ENCODE measurements at regions of chr9 and their contacts with region 1.

Region 1: DNA sequence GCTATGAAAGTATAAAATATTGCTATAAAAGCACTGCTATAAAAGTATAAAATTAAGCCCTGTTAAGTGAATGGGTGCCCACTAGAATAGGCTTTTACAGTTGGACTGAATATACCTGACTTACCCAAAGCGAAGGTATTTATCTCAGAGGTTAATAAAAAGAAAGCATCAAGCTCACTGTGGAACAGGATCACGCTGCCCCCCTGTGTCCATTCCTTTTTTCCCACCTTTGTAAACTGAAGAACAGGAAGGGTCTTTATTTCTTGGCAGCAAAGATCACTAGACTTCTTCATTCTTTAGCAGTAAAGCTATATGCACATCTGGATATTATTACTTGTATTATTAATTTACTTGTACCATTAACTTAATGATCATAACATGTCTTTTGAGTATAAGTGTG is 22.1 kb upstream of the PLPP6 start:
- DNase-seq: peak in 7 of 9 donors; percentile 50 to 72 (median 66)
- ATAC-seq: peak; percentile 70
- H3K4me3 ChIP-seq: no peak overlapping the region
- H3K4me3 Mint-ChIP-seq: no peak overlapping the region
- H3K27ac ChIP-seq: no peak overlapping the region
- H3K27ac Mint-ChIP-seq: peak overlapping the region in 4 of 9 donors; percentile 11 to 62 (median 26)
- H3K4me1 ChIP-seq: peaks cover 0 to 3% of the 10 kb centered on the region in 2 donors
- H3K4me1 Mint-ChIP-seq: peaks cover 0 to 21% (median 15%) of the 10 kb centered on the region in 7 donors
- H3K27me3 ChIP-seq: no peaks in the 10 kb centered on the region
- H3K27me3 Mint-ChIP-seq: no peaks in the 10 kb centered on the region

Region 2: GRCh38 chr9:2857564-2858198 is 1782.3 kb before region 1 on chr9:
- CTCF ChIA-PET with region 1: no interaction called
- POLR2A ChIA-PET with region 1: no interaction called
- intact Hi-C with region 1: loop called in 1 of 2 experiments (anchors 5 kb)
- DNase-seq: peak in 8 of 9 donors; percentile 20 to 58 (median 48)
- ATAC-seq: peak; percentile 91
- H3K4me3 ChIP-seq: no peak overlapping the region
- H3K4me3 Mint-ChIP-seq: no peak overlapping the region
- H3K27ac ChIP-seq: no peak overlapping the region
- H3K27ac Mint-ChIP-seq: no peak overlapping the region
- H3K4me1 ChIP-seq: no peaks in the 10 kb centered on the region
- H3K4me1 Mint-ChIP-seq: peaks cover 0 to 9% (median 3%) of the 10 kb centered on the region in 7 donors
- H3K27me3 ChIP-seq: no peaks in the 10 kb centered on the region
- H3K27me3 Mint-ChIP-seq: peaks cover 23 to 42% (median 32%) of the 10 kb centered on the region in 5 donors

Region 3: GRCh38 chr9:4382722-4383317 is 257.2 kb before region 1 on chr9:
- CTCF ChIA-PET with region 1: interaction called, 25 read pairs
- POLR2A ChIA-PET with region 1: interaction called, 3 read pairs
- intact Hi-C with region 1: loop called (anchors 1 kb)
- DNase-seq: peak in 6 of 9 donors; percentile 7 to 54 (median 42)
- ATAC-seq: no peak
- H3K4me3 ChIP-seq: no peak overlapping the region
- H3K4me3 Mint-ChIP-seq: no peak overlapping the region
- H3K27ac ChIP-seq: no peak overlapping the region
- H3K27ac Mint-ChIP-seq: no peak overlapping the region
- H3K4me1 ChIP-seq: no peaks in the 10 kb centered on the region
- H3K4me1 Mint-ChIP-seq: peaks cover 0 to 10% (median 0%) of the 10 kb centered on the region in 7 donors
- H3K27me3 ChIP-seq: no peaks in the 10 kb centered on the region
- H3K27me3 Mint-ChIP-seq: peaks cover 0 to 4% (median 0%) of the 10 kb centered on the region in 5 donors

Region 4: GRCh38 chr9:4559261-4560182 is 80.5 kb before region 1 on chr9:
- CTCF ChIA-PET with region 1: interaction called, 3 read pairs
- POLR2A ChIA-PET with region 1: interaction called, 3 read pairs
- intact Hi-C with region 1: loop called in 1 of 2 experiments (anchors 1 kb)
- DNase-seq: no peak
- ATAC-seq: no peak
- H3K4me3 ChIP-seq: no peak overlapping the region
- H3K4me3 Mint-ChIP-seq: no peak overlapping the region
- H3K27ac ChIP-seq: no peak overlapping the region
- H3K27ac Mint-ChIP-seq: peak overlapping the region in 1 of 9 donors; percentile 24
- H3K4me1 ChIP-seq: peaks cover 5 to 18% of the 10 kb centered on the region in 2 donors
- H3K4me1 Mint-ChIP-seq: peaks cover 8 to 42% (median 29%) of the 10 kb centered on the region in 7 donors
- H3K27me3 ChIP-seq: no peaks in the 10 kb centered on the region
- H3K27me3 Mint-ChIP-seq: no peaks in the 10 kb centered on the region

Region 5: GRCh38 chr9:4604678-4605095 is 35.3 kb before region 1 on chr9:
- CTCF ChIA-PET with region 1: interaction called, 7 read pairs
- POLR2A ChIA-PET with region 1: interaction called, 7 read pairs
- intact Hi-C with region 1: loop called (anchors 1 kb)
- DNase-seq: peak in 8 of 9 donors; percentile 38 to 77 (median 60)
- ATAC-seq: peak; percentile 88
- H3K4me3 ChIP-seq: peak overlapping the region; percentile 18
- H3K4me3 Mint-ChIP-seq: peak overlapping the region in 3 of 10 donors; percentile 40 to 53 (median 50)
- H3K27ac ChIP-seq: no peak overlapping the region
- H3K27ac Mint-ChIP-seq: peak overlapping the region in 6 of 9 donors; percentile 17 to 85 (median 82)
- H3K4me1 ChIP-seq: peaks cover 16 to 29% of the 10 kb centered on the region in 2 donors
- H3K4me1 Mint-ChIP-seq: peaks cover 12 to 52% (median 32%) of the 10 kb centered on the region in 7 donors
- H3K27me3 ChIP-seq: no peaks in the 10 kb centered on the region
- H3K27me3 Mint-ChIP-seq: no peaks in the 10 kb centered on the region

Region 6: DNA sequence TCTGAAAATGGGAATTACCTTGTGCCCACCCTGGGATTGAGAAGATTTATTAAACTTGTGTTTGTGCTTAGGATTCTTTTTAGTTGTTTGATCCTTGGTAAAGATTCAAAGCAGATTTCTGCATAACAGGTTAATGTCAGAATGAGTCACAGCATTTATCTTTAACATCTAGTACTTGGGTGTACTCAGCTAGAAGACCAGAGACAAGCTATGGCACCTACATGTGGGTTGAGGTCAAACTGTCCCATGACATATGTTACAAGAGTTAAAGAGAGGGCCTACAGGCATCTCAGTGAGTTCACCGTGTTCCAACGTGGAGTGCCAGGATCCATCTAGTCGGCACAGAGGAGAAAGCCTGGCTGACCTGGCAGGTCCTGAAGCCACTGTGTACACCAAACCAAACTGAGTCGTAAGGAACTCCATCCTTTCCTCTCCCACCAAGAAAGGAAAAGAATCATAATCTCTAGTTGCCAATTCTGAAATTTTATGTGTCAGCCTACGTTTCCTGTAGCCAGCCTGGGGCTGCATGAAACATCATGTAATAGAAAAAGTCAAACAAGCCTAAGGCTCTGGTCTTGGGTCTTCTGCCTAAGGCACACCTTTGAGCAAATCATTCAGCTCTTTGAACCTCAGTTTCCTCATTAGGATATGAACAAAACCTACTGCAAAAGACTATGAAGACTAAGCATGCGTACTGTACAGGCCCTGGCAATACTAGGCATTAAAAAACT is 226.4 kb after region 1 on chr9:
- CTCF ChIA-PET with region 1: no interaction called
- POLR2A ChIA-PET with region 1: no interaction called
- intact Hi-C with region 1: no loop called
- DNase-seq: peak in 1 of 9 donors; percentile 41
- ATAC-seq: no peak
- H3K4me3 ChIP-seq: no peak overlapping the region
- H3K4me3 Mint-ChIP-seq: peak overlapping the region in 1 of 10 donors; percentile 44
- H3K27ac ChIP-seq: no peak overlapping the region
- H3K27ac Mint-ChIP-seq: peak overlapping the region in 1 of 9 donors; percentile 77
- H3K4me1 ChIP-seq: no peaks in the 10 kb centered on the region
- H3K4me1 Mint-ChIP-seq: peaks cover 0 to 34% (median 2%) of the 10 kb centered on the region in 7 donors
- H3K27me3 ChIP-seq: no peaks in the 10 kb centered on the region
- H3K27me3 Mint-ChIP-seq: no peaks in the 10 kb centered on the region